ENCODE measurements at regions of chr2 and their contacts with region 1.

Region 1: DNA sequence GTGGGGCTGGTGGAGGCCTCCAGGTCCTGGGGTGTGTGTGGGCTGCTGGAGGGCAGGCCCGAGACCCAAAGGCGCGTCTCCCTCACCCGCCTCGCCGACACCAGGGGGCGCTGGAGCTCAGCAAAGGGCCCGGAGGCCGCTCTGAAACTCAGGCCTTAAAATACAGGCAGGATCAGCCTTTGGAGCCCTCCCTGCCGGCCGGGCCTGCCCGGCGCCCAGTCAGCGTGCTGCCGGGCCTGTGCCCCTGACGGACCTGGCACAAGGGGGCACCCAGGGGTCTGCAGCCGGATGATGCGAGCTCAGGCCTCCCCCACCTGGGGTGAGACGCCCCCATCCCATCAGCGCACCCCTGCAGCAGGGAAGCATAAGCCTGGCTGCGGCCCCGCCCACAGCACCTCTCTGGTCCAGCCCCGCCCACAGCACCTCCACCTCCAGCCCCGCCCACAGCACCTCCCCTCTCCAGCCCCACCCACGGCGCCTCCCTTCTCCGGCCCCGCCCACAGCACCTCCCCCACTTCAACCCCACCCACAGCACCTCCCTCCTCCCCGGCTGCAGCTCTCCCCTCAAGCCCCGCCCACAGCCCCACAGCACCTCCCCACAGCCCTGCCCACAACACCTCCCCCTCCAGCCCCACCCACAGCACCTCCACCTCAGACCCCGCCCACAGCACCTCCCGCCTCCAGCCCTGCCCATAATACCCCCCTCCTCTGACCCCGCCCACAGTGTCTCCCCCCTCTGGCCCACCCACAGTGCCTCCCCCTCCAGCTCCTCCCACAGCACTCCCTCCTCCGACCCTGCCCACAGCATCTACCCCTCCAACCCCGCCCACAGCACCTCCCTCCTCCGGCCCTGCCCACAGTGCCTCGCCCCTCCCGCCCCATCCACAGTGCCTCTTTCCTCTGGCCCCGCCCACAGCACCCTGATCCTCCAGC is 92.8 kb upstream of the OTOS start:
- DNase-seq: no peak
- H3K4me3 ChIP-seq: peak overlapping the region; percentile 38
- CTCF ChIP-seq: peak; percentile 94

Region 2: GRCh38 chr2:240213476-240214421 is 19.5 kb before region 1 on chr2:
- CTCF ChIA-PET with region 1: interaction called, 19 read pairs
- POLR2A ChIA-PET with region 1: no interaction called
- DNase-seq: no peak
- H3K4me3 ChIP-seq: no peak overlapping the region
- CTCF ChIP-seq: no peak

Region 3: GRCh38 chr2:240245706-240246105 is 12.5 kb after region 1 on chr2:
- CTCF ChIA-PET with region 1: interaction called, 34 read pairs
- POLR2A ChIA-PET with region 1: no interaction called
- DNase-seq: no peak
- H3K4me3 ChIP-seq: no peak overlapping the region
- CTCF ChIP-seq: no peak

Region 4: GRCh38 chr2:240327566-240327965 is 94.3 kb after region 1 on chr2:
- CTCF ChIA-PET with region 1: no interaction called
- POLR2A ChIA-PET with region 1: no interaction called
- DNase-seq: no peak
- H3K4me3 ChIP-seq: no peak overlapping the region
- CTCF ChIP-seq: no peak

Region 5: DNA sequence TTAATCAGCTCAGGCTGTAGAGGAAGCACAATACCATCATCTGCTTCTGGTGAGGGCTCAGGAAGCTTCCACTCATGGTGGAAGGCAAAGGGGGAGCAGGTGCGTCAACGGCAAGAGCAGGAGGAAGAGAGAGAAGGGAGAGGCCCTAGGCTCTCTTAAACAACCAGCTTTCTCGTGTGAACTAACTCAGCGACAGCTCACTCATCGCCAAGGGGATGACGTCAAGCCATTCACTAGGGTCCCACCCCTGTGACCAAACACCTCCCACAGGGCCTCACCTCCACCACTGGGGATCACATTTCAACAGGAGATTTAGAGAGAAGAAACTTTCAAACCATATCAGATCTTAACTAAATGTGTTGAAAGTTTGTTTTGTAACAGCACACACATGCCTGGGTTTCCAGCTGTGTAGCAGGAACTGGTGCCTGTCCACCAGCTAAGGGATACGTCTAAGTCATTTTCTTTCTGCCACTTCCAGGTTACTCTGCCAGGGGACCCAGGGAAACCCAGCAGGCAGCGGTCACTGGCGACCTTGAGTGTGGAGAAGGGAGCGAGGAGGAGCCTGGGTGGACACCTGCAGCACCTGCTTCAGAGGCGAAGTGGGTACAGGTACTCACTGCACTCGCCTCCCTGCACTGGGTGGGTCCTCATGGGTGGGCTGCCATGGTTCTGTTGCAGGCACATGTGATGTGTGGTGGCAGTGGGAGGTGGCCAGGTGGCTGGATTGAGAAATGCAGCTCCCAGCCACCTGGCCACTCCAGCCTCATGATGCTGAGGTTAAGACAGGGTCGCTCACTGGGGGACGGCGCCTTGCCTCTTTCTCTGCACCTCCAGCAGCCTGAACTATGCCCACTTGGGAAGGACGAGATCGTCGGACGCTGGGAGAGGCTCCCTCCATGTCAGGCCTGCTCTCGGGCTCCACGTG is 193.8 kb after region 1 on chr2:
- CTCF ChIA-PET with region 1: interaction called, 13 read pairs
- POLR2A ChIA-PET with region 1: interaction called, 4 read pairs
- DNase-seq: no peak
- H3K4me3 ChIP-seq: no peak overlapping the region
- CTCF ChIP-seq: no peak

Region 6: GRCh38 chr2:240449764-240450531 is 216.7 kb after region 1 on chr2:
- CTCF ChIA-PET with region 1: interaction called, 16 read pairs
- POLR2A ChIA-PET with region 1: no interaction called
- DNase-seq: no peak
- H3K4me3 ChIP-seq: no peak overlapping the region
- CTCF ChIP-seq: no peak

Measured in AG04449 (cell line).